Psoas muscle (tissue), 8 donors: ENCODE measurements at regions of chr7 and their contacts with region 1.

Region 1: GRCh38 chr7:105131033-105131656 is 117.1 kb downstream of the KMT2E start:
- DNase-seq: no peak
- ATAC-seq: no peak
- H3K4me3 ChIP-seq: no peak overlapping the region
- H3K27ac ChIP-seq: no peak overlapping the region
- H3K4me1 ChIP-seq: peaks cover 23% of the 10 kb centered on the region
- H3K27me3 ChIP-seq: no peaks in the 10 kb centered on the region
- CTCF ChIP-seq: no peak

Region 2: DNA sequence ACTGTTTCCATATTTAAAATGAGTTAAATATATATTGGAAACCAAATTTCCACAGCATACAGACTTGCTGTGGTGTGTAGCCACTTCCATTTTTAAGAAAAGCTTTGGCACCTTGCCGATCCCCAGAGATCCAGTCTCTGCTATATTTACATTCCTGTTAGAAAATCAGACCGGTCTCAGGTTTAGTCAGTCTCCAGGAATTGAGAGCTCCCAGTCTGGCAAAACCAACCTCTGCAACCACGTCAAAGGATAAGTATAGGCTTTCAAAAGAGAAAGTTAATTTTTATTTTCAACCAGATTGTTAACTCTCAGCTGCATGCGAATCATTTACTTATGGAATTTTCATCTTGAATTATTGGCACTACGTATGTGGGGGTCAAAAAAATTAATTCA is 362.8 kb after region 1 on chr7:
- intact Hi-C with region 1: loop called in 1 of 2 experiments (anchors 10 kb)
- DNase-seq: no peak
- ATAC-seq: peak in 2 of 4 donors; percentile 27 to 40
- H3K4me3 ChIP-seq: no peak overlapping the region
- H3K27ac ChIP-seq: no peak overlapping the region
- H3K4me1 ChIP-seq: no peaks in the 10 kb centered on the region
- H3K27me3 ChIP-seq: no peaks in the 10 kb centered on the region
- CTCF ChIP-seq: no peak